GM10248 (cell line): ENCODE measurements at regions of chr13 and their contacts with region 1.

Region 1: GRCh38 chr13:28324181-28324789 is 170.6 kb downstream of the FLT1 start:
- DNase-seq: peak; percentile 82
- CTCF ChIP-seq: peak; percentile 71

Region 2: DNA sequence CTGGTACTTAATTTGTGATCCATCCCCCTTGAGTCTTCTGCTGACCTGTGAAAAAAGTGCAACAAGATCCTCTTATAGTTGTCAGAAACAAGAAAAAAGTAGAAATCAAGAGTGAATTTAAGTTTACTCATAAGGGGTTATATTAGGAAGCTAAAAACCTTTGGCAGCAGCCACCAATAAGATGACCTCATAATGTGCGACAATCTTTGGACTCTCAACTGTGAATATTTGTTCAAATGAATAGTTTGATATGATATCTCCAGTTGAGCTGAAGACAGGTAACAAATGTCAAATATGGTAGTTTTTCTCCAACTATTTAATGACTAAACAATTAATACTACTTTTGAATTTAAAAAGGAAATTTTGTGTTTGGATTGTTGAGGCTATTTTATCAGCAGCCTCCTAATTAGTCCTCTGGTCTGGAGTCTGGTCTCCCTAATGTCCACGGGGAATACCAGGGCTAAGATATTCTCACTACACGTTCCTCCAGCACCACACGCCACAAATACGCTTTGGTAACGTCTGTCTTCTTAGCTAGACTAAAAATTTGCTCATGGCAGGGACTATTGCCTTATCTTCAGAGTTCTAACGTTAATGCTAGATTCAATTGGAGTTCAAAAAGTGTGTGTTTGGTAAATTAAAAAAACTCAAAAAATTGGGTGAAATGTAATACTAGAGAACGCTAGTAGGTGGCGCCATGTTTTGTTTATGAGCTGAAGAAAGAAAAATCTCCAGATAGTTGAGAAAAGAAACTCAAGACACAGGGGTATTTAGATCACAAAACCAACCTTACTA is 455.4 kb before region 1 on chr13:
- CTCF ChIA-PET with region 1: no interaction called
- POLR2A ChIA-PET with region 1: no interaction called
- DNase-seq: peak; percentile 33
- CTCF ChIP-seq: peak; percentile 28

Region 3: DNA sequence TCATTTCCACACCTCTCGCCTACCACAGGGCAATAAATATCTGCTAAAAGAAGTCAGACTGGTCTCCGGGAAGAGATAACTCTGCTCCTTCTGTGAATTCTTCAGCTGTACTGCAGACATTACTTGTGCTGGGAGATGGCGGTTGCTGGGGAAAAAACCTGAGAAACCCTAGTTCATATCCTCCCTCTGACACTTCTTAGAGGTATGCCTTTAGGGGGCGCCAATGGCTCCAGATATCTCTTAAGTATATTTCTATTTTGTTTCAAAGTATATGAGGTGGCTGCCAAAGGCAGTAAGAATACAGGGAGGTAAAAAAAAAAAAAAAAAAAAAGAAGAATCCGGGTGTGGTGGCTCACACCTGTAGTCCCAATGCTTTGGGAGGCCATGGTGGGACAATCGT is 10.7 kb before region 1 on chr13:
- CTCF ChIA-PET with region 1: interaction called, 12 read pairs
- POLR2A ChIA-PET with region 1: no interaction called
- DNase-seq: peak; percentile 32
- CTCF ChIP-seq: peak; percentile 22

Region 4: GRCh38 chr13:28337166-28338005 is 13.1 kb after region 1 on chr13:
- CTCF ChIA-PET with region 1: interaction called, 34 read pairs
- POLR2A ChIA-PET with region 1: no interaction called
- DNase-seq: no peak
- CTCF ChIP-seq: no peak

Region 5: GRCh38 chr13:28513745-28514144 is 189.5 kb after region 1 on chr13:
- CTCF ChIA-PET with region 1: no interaction called
- POLR2A ChIA-PET with region 1: no interaction called
- DNase-seq: no peak
- CTCF ChIP-seq: no peak

Region 6: DNA sequence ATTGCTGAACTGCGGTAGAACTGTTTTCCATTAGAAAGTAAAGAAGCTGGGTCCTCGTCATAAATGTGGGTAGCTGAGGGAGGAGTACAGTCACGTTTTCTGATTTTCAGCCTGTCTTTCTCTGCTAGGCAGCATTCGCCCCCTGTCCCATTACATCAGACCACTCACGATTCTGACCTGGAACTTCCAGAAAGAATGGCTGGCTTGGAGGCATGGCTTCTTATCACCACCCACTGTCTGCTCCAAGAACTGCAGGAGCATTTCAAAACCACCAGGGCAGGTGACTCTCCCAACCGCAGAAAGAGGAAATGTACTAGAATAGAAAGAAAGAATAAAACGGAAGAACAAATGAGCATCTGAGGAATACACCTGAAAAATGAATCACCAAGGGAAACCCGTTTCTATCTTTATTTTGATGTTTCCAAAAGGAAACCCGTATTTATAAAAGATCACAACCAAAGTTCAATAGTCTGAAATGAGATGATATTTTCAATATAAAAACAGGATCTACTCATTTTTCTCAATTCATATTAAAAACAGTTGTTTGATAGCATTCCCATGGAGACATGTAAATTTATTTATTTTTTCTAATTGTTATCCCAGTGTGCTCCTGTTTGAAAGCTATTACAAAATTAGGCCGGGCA is 312.5 kb after region 1 on chr13:
- CTCF ChIA-PET with region 1: interaction called, 20 read pairs
- POLR2A ChIA-PET with region 1: no interaction called
- DNase-seq: peak; percentile 50
- CTCF ChIP-seq: peak; percentile 78

Region 7: DNA sequence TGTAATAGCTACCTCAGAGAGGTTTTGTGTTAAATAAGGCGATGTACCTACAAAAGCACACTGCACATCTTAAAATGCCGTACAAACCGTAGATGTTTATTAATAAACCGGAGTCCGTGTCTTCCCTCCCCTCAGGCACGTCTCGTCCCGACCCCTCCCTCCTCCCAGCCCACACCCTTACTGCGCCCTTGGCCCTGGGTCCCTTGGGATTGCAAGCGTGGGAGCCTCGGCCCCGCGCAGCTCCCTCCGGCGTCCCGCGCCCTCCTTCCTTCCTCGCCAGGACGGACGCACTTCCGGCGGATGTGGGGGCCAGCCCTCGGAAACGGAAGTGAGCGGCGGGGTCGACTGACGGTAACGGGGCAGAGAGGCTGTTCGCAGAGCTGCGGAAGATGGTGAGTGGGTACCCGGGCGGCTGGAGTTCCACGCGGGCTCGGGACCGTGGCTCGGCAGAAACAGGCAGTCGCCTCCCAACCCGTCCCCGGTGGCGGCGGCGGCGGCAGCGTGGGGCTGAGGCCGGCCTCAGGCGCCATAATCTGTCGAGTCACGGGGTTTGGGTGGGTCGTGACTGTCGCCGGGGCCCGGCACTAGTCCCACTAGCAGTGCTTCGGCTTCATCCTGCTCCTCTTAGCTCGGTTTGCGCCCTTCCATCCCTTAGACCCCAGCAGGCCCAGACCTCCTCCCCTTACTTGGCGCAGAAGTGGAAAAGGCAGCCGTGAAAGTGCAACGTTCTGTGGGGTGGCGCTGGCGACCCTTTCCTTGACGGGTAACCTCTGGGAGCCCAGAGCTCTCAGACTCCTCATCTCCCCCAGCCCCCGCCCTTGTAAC is 334.7 kb after region 1 on chr13 and contains the start of gene POMP:
- CTCF ChIA-PET with region 1: interaction called, 12 read pairs
- POLR2A ChIA-PET with region 1: no interaction called
- DNase-seq: peak; percentile 94
- CTCF ChIP-seq: no peak

Region 8: GRCh38 chr13:28792992-28793391 is 468.7 kb after region 1 on chr13:
- CTCF ChIA-PET with region 1: interaction called, 25 read pairs
- POLR2A ChIA-PET with region 1: no interaction called
- DNase-seq: no peak
- CTCF ChIP-seq: no peak